ENCODE measurements at regions of chr12 and their contacts with region 1.

Region 1: GRCh38 chr12:22624870-22625761 is at the start of gene ETNK1:
- DNase-seq: peak; percentile 97 to 99
- H3K4me3 ChIP-seq: peak within 1 kb of the TSS; percentile 94
- H3K4me3 Mint-ChIP-seq: peak within 1 kb of the TSS; percentile 99
- H3K27ac Mint-ChIP-seq: peak within 1 kb of the TSS; percentile 97
- H3K4me1 ChIP-seq: peaks cover 26% of the 10 kb centered on the region
- H3K4me1 Mint-ChIP-seq: peaks cover 22% of the 10 kb centered on the region
- H3K27me3 ChIP-seq: no peaks in the 10 kb centered on the region
- H3K27me3 Mint-ChIP-seq: peaks cover 3% of the 10 kb centered on the region
- CTCF ChIP-seq: no peak
- total RNA-seq, gene ETNK1: 78.7 and 89.9 TPM in 2 replicates

Region 2: DNA sequence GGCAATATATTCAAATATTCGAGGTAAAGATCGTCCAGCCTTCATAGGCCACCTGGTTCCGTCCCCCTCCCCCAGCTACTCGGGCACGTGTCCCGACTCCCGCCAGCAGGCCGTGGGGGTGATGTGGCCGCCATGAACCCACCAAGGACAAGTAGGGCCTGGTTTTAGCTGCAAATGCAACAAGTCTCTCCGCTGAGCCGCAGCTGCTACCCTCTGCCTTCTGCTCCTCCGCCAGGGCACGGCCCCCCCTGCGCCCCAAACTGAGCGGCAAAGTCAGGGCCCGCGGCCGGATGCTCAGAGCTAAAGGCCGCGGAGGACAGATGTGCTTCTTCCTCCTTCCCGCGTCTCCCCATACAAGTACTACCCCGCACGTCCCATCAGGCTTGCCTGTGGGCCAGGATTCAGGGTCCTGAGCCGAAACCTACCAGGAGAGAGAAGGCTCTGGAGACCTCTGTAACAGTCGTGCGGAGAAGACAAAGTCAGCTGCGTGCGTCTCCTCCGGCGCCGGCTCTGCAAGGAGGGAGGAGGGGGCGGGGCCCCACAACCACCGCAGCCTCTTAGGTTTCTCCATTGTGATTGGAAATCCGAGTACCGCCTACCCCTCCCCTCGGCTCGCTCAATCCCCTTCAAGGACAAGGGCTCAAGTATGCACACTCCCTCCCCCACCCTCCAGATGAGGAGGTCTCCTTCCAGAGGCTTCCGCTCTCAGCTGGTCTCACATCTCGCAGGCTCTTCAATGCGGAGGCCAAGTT is 967.6 kb before region 1 on chr12 and contains the start of gene LDHB:
- CTCF ChIA-PET with region 1: no interaction called
- POLR2A ChIA-PET with region 1: no interaction called
- intact Hi-C with region 1: loop called (anchors 10 kb)
- DNase-seq: peak; percentile 99
- H3K4me3 ChIP-seq: peak within 1 kb of the TSS; percentile 78
- H3K4me3 Mint-ChIP-seq: peak within 1 kb of the TSS; percentile 85
- H3K27ac Mint-ChIP-seq: peak within 1 kb of the TSS; percentile 96
- H3K4me1 ChIP-seq: peaks cover 38% of the 10 kb centered on the region
- H3K4me1 Mint-ChIP-seq: peaks cover 32% of the 10 kb centered on the region
- H3K27me3 ChIP-seq: no peaks in the 10 kb centered on the region
- H3K27me3 Mint-ChIP-seq: no peaks in the 10 kb centered on the region
- CTCF ChIP-seq: no peak
- total RNA-seq, gene LDHB: 1,752 and 1,948 TPM in 2 replicates

Region 3: DNA sequence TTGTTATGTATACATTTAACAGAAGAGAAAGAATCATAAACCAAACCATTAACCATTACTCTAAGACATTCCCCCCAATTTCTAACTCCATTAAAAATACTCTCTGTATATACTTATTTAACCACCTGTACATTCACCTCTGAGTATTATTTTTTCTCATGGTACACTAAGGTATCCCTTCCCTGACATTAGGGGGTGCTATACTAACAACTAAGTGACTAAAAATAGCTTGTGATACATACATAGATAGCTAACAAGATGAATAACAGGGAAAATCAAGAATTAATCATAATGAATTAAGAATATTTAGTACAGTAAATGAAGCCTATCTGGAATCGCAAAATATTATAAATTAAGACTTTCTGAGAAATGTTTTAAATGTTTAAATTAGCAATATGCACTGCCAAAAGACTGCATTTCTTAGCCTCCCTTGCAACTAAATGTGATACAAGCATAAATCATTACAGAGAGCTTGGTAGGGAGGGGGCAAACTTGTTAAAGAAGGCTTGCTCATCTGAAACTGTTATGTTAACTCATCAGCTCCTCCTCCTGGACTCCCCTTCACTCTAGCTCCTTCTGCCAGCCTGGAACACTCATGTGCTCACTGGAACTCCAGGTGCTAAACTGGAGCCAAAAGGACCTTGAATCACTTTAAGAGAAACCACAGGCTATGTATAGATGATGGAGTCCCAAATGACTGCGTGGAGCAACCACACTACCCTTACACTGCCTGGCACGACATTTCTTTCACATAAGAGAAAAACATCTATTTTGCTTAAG is 95.6 kb before region 1 on chr12:
- CTCF ChIA-PET with region 1: interaction called, 9 read pairs
- POLR2A ChIA-PET with region 1: interaction called, 11 read pairs
- intact Hi-C with region 1: no loop called
- DNase-seq: peak in 1 of 2 experiments; percentile 32
- H3K4me3 ChIP-seq: no peak overlapping the region
- H3K4me3 Mint-ChIP-seq: no peak overlapping the region
- H3K27ac Mint-ChIP-seq: no peak overlapping the region
- H3K4me1 ChIP-seq: peaks cover 5% of the 10 kb centered on the region; the same call in 1 of the 2 replicates
- H3K4me1 Mint-ChIP-seq: peaks cover 6% of the 10 kb centered on the region
- H3K27me3 ChIP-seq: no peaks in the 10 kb centered on the region
- H3K27me3 Mint-ChIP-seq: no peaks in the 10 kb centered on the region
- CTCF ChIP-seq: peak; percentile 63 to 66

Region 4: GRCh38 chr12:22544038-22544979 is 80.8 kb before region 1 on chr12 and contains the start of gene C2CD5:
- CTCF ChIA-PET with region 1: interaction called, 6 read pairs
- POLR2A ChIA-PET with region 1: interaction called, 37 read pairs
- intact Hi-C with region 1: loop called (anchors 1 kb)
- DNase-seq: peak; percentile 100
- H3K4me3 ChIP-seq: peak within 1 kb of the TSS; percentile 69
- H3K4me3 Mint-ChIP-seq: peak within 1 kb of the TSS; percentile 87
- H3K27ac Mint-ChIP-seq: peak within 1 kb of the TSS; percentile 89
- H3K4me1 ChIP-seq: peaks cover 8% of the 10 kb centered on the region
- H3K4me1 Mint-ChIP-seq: peaks cover 18% of the 10 kb centered on the region
- H3K27me3 ChIP-seq: no peaks in the 10 kb centered on the region
- H3K27me3 Mint-ChIP-seq: no peaks in the 10 kb centered on the region
- CTCF ChIP-seq: peak in 1 of 2 experiments; percentile 58
- total RNA-seq, gene C2CD5: 44.6 and 51.5 TPM in 2 replicates

Region 5: DNA sequence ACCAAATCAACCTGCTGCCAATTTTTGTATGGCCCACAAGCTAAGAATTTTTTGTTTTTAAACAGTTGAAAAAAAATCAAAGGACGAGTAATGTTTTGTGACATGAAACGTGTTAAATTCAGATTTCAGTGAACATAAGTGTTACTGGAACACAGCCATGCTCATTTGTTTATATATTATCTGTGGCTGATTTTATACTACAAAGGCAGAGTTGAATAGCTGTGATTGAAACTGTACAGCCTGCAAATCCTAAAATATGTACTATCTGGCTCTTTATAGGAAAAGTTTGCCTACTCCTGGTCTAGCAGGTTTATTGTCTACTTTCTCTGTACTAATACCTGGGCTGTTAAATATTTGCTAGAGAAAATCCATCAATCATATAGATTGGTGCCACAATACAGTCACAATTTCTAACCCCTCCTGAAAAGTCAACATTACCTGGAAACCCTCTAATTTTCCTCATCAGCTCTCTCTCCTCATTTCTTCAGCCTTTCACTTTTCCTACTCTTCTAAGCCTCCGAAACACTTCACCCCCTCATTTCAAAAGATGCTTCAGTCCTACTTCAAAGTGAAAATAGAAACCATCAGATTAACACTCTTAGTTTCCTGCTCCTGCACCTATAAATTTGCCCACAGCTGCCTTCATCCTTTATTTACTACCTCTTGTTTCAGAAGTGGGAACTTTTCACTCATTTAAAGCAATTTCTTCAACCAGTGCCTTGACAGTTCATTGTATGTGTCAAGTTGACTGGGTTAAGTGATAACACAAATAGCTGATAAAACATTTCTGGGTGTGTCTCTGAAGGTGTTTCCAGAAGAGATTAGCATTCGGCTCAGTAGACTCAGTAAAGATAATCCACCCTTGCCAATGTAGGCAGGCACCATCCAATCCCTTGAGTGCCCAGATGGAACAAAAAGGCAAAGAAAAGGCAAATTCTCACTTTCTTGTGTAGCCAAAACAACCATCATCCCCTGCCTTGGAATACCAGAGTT is 62.8 kb before region 1 on chr12:
- CTCF ChIA-PET with region 1: no interaction called
- POLR2A ChIA-PET with region 1: no interaction called
- intact Hi-C with region 1: loop called (anchors 2 kb)
- DNase-seq: peak in 1 of 2 experiments; percentile 45
- H3K4me3 ChIP-seq: no peak overlapping the region
- H3K4me3 Mint-ChIP-seq: peak overlapping the region; percentile 8
- H3K27ac Mint-ChIP-seq: peak overlapping the region; percentile 15
- H3K4me1 ChIP-seq: peaks cover 28% of the 10 kb centered on the region
- H3K4me1 Mint-ChIP-seq: peaks cover 31% of the 10 kb centered on the region
- H3K27me3 ChIP-seq: no peaks in the 10 kb centered on the region
- H3K27me3 Mint-ChIP-seq: no peaks in the 10 kb centered on the region
- CTCF ChIP-seq: no peak

Region 6: DNA sequence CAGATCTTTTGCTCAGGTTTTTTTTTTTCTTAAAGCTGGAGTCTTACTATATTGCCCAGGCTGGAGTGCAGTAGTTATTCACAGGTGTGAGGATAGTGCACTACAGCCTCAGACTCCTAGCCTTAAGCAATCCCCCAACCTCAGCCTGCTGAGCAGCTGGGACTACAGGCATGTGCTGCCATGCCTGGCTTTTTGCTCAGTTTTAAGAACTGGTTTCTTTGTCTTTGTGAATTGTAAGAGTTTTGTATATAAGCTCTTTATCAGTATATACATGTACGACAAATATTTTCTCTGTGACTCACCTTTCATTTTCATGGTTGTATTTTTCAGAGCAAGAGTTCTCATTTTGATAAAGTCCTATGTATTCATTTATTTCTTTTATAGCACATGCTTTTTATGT is 47.4 kb before region 1 on chr12:
- CTCF ChIA-PET with region 1: no interaction called
- POLR2A ChIA-PET with region 1: no interaction called
- intact Hi-C with region 1: loop called (anchors 2 kb)
- DNase-seq: no peak
- H3K4me3 ChIP-seq: no peak overlapping the region
- H3K4me3 Mint-ChIP-seq: no peak overlapping the region
- H3K27ac Mint-ChIP-seq: no peak overlapping the region
- H3K4me1 ChIP-seq: peaks cover 6% of the 10 kb centered on the region
- H3K4me1 Mint-ChIP-seq: no peaks in the 10 kb centered on the region
- H3K27me3 ChIP-seq: no peaks in the 10 kb centered on the region
- H3K27me3 Mint-ChIP-seq: no peaks in the 10 kb centered on the region
- CTCF ChIP-seq: no peak

Region 7: GRCh38 chr12:22588817-22589216 is 36.3 kb before region 1 on chr12:
- CTCF ChIA-PET with region 1: no interaction called
- POLR2A ChIA-PET with region 1: interaction called, 6 read pairs
- intact Hi-C with region 1: loop called (anchors 1 kb)
- DNase-seq: peak in 1 of 2 experiments; percentile 47
- H3K4me3 ChIP-seq: no peak overlapping the region
- H3K4me3 Mint-ChIP-seq: no peak overlapping the region
- H3K27ac Mint-ChIP-seq: no peak overlapping the region
- H3K4me1 ChIP-seq: no peaks in the 10 kb centered on the region
- H3K4me1 Mint-ChIP-seq: peaks cover 3% of the 10 kb centered on the region
- H3K27me3 ChIP-seq: no peaks in the 10 kb centered on the region
- H3K27me3 Mint-ChIP-seq: no peaks in the 10 kb centered on the region
- CTCF ChIP-seq: no peak

Measured in Caco-2 (cell line).